ENCODE measurements at regions of chr2 and their contacts with region 1.

Region 1: DNA sequence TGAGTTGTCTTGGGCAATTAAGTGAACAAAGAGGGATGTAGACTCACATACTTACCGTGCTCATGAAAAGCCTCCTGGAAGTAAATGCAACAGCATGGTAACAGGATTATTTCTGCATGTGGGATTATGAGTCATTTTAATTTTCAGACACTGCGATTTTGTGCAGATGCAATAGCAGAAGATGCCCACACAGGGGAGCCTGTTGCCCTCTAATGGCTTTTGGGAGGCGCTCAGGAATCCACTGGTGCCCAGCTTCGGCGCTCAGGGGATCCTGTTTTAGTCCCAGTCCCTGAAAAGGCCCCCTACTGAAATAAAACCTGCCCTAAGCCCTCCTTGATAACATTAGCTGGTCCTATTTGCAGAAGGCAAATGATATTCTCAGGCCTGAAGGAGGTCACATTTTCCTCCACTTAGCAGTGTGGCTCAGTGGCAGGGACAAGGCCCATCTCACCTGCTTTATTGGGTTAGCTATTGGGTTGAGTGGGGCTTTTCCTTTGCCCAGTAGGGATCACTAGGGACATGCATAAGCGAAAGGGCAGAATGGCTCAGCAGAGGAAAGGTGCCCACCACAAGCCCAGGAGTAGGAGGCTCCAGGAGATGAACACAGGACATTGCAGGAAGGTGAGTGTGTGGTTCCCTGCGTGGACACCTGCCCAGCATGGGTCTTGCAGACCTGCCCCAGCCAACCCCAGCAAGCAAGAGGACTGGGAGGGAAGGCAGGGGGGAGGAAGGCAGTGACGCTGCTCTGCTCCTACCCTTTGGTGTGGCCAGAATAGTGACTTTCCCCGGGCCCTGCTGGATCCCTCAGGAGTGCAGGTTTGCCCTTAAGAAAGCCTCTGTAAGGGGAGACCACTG is 26.5 kb upstream of the KCNS3 start:
- DNase-seq: peak; percentile 47
- ATAC-seq: peak; percentile 68 to 81

Region 2: GRCh38 chr2:17337507-17337906 is 514.5 kb before region 1 on chr2:
- intact Hi-C with region 1: no loop called
- DNase-seq: no peak
- ATAC-seq: no peak

Region 3: GRCh38 chr2:17689010-17689409 is 162.9 kb before region 1 on chr2:
- intact Hi-C with region 1: no loop called
- DNase-seq: no peak
- ATAC-seq: no peak

Region 4: DNA sequence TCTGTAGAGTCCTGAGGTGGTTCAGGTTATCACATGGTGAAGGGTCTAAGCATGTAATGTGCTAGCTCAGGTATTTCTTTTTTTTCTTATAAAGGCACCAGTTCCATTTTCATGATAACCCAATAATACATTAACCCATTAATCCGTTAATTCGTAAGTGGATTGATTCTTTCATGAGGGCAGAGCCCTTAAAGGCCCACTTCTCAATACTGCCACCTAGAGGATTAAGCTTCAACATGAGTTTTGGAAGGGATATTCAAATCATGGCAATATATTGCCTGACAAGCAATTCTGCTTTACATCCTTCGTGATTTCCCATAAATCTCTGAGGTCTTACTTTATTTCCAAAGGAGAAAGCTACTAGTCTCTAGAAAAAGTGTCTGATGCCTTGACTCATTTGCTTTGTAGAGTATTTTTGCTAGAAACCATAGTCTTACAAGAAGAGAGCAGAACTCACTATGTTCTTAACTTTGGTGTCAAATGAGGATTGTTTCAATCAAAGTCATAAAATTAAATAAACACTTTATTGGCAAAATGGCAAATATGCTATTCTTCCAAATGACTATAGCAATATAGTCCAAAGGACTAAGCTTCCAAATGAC is 297.8 kb after region 1 on chr2:
- intact Hi-C with region 1: loop called (anchors 5 to 10 kb)
- DNase-seq: no peak
- ATAC-seq: no peak

Region 5: DNA sequence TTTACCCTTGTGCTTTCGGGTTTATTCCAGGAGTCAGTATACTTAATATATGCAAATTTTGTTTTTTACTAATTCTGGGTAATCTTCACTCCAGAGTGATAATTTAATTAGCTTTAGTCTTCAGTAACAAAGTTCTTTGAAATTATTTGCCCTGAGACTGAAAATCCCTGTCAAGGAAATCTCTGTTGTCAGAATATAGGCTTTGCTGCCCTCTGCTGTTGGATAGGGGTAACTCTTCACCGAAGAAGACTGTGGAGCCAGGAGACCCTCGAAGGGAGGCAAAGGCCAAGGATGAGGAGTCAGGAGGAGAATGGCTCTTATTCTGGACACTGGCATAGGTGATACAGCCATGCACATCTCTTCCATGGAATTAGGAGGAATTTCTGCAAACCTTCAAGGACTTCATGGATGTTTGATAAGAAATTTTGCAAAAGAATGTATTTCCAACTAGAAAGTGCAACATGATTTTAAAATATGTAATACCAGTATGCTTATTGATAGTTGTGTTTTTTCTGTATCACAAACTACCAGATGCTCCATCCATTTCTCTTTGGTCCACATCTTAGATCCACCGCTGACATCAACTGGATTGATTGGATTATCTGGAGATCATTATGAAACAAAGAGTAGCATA is 526.2 kb after region 1 on chr2:
- intact Hi-C with region 1: loop called (anchors 2 to 5 kb)
- DNase-seq: no peak
- ATAC-seq: peak; percentile 34 to 63

Measured in left cardiac atrium (tissue), 4 donors.